AG04449 (cell line): ENCODE measurements at regions of chr4 and their contacts with region 1.

Region 1: GRCh38 chr4:48546336-48546735 is 56.3 kb downstream of the ZAR1 start:
- DNase-seq: no peak
- H3K4me3 ChIP-seq: no peak overlapping the region
- CTCF ChIP-seq: peak; percentile 62

Region 2: DNA sequence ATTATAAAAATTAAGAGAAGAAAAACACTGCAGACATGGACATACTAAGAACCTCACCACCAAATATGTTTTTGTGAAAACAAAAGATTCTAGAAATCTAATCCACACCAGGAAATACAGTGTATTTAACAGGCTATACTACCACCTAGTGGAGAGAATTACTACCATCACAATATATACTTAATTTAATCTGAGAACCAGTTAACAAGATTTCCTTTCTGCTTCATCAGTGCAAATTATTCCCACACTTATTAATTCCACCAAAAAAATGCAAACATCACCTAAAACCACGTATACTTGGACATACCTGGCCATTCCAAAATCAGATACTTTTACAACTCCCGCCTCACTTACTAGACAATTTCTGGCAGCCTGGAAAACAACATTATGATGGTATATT is 405.3 kb before region 1 on chr4:
- CTCF ChIA-PET with region 1: interaction called, 13 read pairs
- POLR2A ChIA-PET with region 1: no interaction called
- DNase-seq: no peak
- H3K4me3 ChIP-seq: no peak overlapping the region
- CTCF ChIP-seq: peak; percentile 33

Region 3: GRCh38 chr4:48315728-48316630 is 230.4 kb before region 1 on chr4:
- CTCF ChIA-PET with region 1: interaction called, 21 read pairs
- POLR2A ChIA-PET with region 1: no interaction called
- DNase-seq: no peak
- H3K4me3 ChIP-seq: no peak overlapping the region
- CTCF ChIP-seq: peak; percentile 76

Region 4: DNA sequence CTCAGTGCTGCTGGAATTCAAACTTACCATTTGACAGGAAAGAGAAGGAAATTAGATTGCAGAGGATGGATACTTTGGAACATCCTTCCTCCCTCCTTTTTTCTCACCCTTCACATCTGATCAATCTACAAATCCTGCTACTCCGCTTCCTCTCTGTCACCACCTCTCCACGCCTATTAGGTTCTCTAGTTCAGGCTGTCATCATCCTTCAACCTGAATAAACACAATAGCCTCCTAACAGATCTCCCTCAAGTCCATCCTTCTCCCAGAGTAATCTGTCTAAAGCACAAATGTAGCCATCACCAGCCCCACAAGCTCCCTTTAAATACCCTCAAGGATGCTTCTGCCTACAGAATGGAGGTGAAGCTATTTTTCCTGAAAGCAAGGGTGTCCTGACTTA is 225.0 kb before region 1 on chr4:
- CTCF ChIA-PET with region 1: interaction called, 21 read pairs
- POLR2A ChIA-PET with region 1: no interaction called
- DNase-seq: no peak
- H3K4me3 ChIP-seq: no peak overlapping the region
- CTCF ChIP-seq: no peak

Region 5: GRCh38 chr4:48445704-48446103 is 100.6 kb before region 1 on chr4:
- CTCF ChIA-PET with region 1: interaction called, 14 read pairs
- POLR2A ChIA-PET with region 1: no interaction called
- DNase-seq: no peak
- H3K4me3 ChIP-seq: no peak overlapping the region
- CTCF ChIP-seq: no peak

Region 6: GRCh38 chr4:48557478-48557877 is 11.1 kb after region 1 on chr4:
- CTCF ChIA-PET with region 1: interaction called, 39 read pairs
- POLR2A ChIA-PET with region 1: no interaction called
- DNase-seq: no peak
- H3K4me3 ChIP-seq: no peak overlapping the region
- CTCF ChIP-seq: peak; percentile 2

Region 7: GRCh38 chr4:48851651-48852050 is 305.3 kb after region 1 on chr4:
- CTCF ChIA-PET with region 1: no interaction called
- POLR2A ChIA-PET with region 1: no interaction called
- DNase-seq: no peak
- H3K4me3 ChIP-seq: no peak overlapping the region
- CTCF ChIP-seq: no peak